Calu3 (cell line): ENCODE measurements at regions of chr3 and their contacts with region 1.

Region 1: DNA sequence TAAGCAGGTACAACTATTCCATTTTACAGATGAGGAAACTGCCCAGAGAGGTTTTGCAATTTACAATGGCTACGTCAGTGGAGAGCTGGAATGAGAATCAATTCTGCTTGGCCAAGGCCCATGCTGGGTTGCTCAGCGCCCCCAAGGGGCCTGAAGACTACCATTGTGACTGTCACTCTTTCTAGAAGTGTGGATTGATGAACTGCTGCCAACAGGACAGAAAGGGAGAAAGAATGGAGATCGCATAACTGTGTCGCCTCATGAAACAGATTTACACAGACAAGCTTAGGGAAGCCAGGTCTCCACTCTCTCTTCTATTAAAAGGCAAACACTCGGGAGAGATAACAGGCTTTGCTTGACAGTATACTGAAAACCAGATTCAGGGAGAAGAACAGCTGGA is 160.0 kb downstream of the STT3B start:
- DNase-seq: no peak
- H3K4me3 Mint-ChIP-seq: no peak overlapping the region
- H3K27ac Mint-ChIP-seq: no peak overlapping the region
- H3K4me1 Mint-ChIP-seq: no peaks in the 10 kb centered on the region
- H3K27me3 Mint-ChIP-seq: no peaks in the 10 kb centered on the region
- CTCF ChIP-seq: no peak

Region 2: GRCh38 chr3:31624083-31624709 is 68.5 kb before region 1 on chr3:
- CTCF ChIA-PET with region 1: interaction called, 13 read pairs
- intact Hi-C with region 1: no loop called
- DNase-seq: no peak
- H3K4me3 Mint-ChIP-seq: no peak overlapping the region
- H3K27ac Mint-ChIP-seq: no peak overlapping the region
- H3K4me1 Mint-ChIP-seq: no peaks in the 10 kb centered on the region
- H3K27me3 Mint-ChIP-seq: no peaks in the 10 kb centered on the region
- CTCF ChIP-seq: no peak